Naive thymus-derived CD4-positive, alpha-beta T cell (primary cell): ENCODE measurements at regions of chr11 and their contacts with region 1.

Region 1: DNA sequence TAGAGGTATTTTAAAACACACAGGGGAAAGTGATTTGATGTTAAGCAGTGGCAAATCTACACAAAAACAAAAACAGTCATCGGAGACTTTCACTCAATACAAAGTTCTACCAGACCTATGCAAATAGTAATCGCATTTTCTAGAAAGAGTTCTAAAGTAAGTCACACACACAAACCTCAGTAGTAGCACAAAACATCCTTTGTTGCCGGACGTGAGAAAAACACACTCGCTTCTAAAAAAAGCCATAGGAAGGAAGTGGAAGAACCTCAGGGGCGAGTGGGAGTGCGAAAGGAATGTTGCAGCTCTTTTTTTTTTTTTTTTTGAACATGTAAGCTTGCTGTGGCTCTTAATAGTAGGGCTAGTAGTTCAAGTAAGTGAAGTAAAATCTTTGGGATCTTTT is 88.9 kb downstream of the MAML2 start:
- DNase-seq: peak in 7 of 9 donors; percentile 32 to 64 (median 43)
- ATAC-seq: peak; percentile 32
- H3K4me3 ChIP-seq: peak overlapping the region; percentile 40
- H3K4me3 Mint-ChIP-seq: peak overlapping the region; percentile 74 to 87 (median 81)
- H3K27ac ChIP-seq: peak overlapping the region; percentile 77
- H3K27ac Mint-ChIP-seq: peak overlapping the region; percentile 87 to 100 (median 96)
- H3K4me1 ChIP-seq: peaks cover 58 to 78% of the 10 kb centered on the region in 2 donors
- H3K4me1 Mint-ChIP-seq: peaks cover 62 to 99% (median 94%) of the 10 kb centered on the region in 7 donors
- H3K27me3 ChIP-seq: no peaks in the 10 kb centered on the region
- H3K27me3 Mint-ChIP-seq: no peaks in the 10 kb centered on the region

Region 2: DNA sequence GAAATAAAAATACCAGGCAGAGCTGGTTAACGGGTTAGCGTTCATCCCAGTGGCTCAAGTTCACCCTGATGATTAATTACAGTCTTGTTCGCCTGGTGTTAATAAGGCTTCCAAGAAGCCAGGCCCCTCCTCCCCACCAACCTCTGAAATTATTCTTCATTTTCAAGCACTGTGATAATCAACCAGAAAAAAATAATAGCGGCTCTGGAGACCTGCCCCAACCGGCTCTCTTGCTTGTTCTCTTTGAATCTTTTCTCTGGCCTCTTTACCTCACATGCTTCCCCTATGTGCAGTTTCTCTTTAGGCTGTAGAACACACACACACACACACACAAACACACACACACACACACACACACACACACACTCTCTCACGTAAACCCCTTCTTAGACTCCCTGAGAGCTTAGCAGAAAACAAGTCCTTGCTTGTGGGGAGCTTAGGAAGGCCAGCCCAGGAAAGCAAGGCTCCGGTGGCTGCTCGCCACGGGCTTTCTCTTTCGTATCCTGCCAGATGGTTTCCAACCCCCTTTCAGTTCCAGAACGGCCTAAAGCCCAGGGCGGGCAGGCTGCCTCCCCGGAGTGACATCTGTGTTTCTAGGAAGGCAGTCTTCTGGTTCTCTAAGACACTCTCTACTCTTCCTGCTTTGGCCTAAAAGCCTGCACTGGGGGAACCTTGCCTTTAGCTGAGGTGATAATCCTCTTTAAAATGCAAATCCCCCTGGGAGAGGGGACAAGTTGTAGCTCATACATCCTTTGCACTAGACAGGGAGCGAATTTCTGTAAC is 916.7 kb before region 1 on chr11:
- CTCF ChIA-PET with region 1: no interaction called
- POLR2A ChIA-PET with region 1: no interaction called
- intact Hi-C with region 1: no loop called
- DNase-seq: peak; percentile 12 to 55 (median 39)
- ATAC-seq: peak; percentile 69
- H3K4me3 ChIP-seq: peak overlapping the region; percentile 36
- H3K4me3 Mint-ChIP-seq: no peak overlapping the region
- H3K27ac ChIP-seq: peak overlapping the region; percentile 59
- H3K27ac Mint-ChIP-seq: no peak overlapping the region
- H3K4me1 ChIP-seq: peaks cover 4 to 20% of the 10 kb centered on the region in 2 donors
- H3K4me1 Mint-ChIP-seq: peaks cover 0 to 12% (median under 1%) of the 10 kb centered on the region in 7 donors
- H3K27me3 ChIP-seq: no peaks in the 10 kb centered on the region
- H3K27me3 Mint-ChIP-seq: no peaks in the 10 kb centered on the region

Region 3: GRCh38 chr11:95680169-95680929 is 573.7 kb before region 1 on chr11:
- CTCF ChIA-PET with region 1: no interaction called
- POLR2A ChIA-PET with region 1: no interaction called
- intact Hi-C with region 1: loop called in 1 of 2 experiments (anchors 10 kb)
- DNase-seq: no peak
- ATAC-seq: no peak
- H3K4me3 ChIP-seq: no peak overlapping the region
- H3K4me3 Mint-ChIP-seq: peak overlapping the region; percentile 21 to 78 (median 69)
- H3K27ac ChIP-seq: peak overlapping the region; percentile 60
- H3K27ac Mint-ChIP-seq: peak overlapping the region in 7 of 9 donors; percentile 44 to 87 (median 73)
- H3K4me1 ChIP-seq: peaks cover 0 to 41% of the 10 kb centered on the region in 2 donors
- H3K4me1 Mint-ChIP-seq: peaks cover 27 to 89% (median 71%) of the 10 kb centered on the region in 7 donors
- H3K27me3 ChIP-seq: no peaks in the 10 kb centered on the region
- H3K27me3 Mint-ChIP-seq: no peaks in the 10 kb centered on the region

Region 4: DNA sequence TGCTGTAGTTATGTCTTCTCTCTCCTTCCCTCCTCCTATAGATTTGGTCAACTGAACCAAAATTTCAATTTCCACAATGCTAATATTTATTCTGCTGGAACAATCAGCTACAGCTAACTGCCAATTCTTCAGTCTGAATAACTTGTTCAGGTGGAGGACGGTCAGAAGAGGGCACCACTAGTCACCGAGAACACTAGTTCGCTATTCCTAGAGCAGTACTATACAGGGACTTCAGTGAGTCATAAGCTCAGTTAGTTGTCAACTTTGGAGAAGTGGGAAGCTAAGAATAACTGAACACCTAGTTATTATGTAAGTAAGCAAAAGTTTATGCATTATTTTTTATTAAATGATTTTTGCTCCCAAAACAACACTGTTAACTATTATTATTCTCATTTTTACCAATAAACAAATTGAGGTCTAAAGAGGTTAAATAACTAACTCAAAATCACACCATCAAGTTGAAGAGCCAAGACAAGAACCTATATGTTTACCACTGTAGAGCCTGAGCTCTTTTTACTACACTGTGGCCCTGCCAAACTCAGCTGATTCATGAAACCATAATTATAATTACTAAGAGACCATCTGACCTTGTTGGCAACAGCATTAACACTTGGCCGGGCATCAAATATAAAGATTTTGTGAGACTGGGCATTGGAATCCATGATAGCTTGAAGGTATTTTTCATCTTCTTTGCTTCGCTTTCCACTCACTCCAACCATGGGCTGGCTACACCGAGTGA is 404.8 kb before region 1 on chr11:
- CTCF ChIA-PET with region 1: no interaction called
- POLR2A ChIA-PET with region 1: no interaction called
- intact Hi-C with region 1: no loop called
- DNase-seq: peak in 6 of 9 donors; percentile 2 to 39 (median 19)
- ATAC-seq: peak; percentile 64
- H3K4me3 ChIP-seq: no peak overlapping the region
- H3K4me3 Mint-ChIP-seq: no peak overlapping the region
- H3K27ac ChIP-seq: no peak overlapping the region
- H3K27ac Mint-ChIP-seq: peak overlapping the region in 2 of 9 donors; percentile 11 to 49
- H3K4me1 ChIP-seq: no peaks in the 10 kb centered on the region
- H3K4me1 Mint-ChIP-seq: no peaks in the 10 kb centered on the region
- H3K27me3 ChIP-seq: no peaks in the 10 kb centered on the region
- H3K27me3 Mint-ChIP-seq: no peaks in the 10 kb centered on the region

Region 5: GRCh38 chr11:96207459-96208449 is 46.3 kb before region 1 on chr11:
- CTCF ChIA-PET with region 1: no interaction called
- POLR2A ChIA-PET with region 1: interaction called, 3 read pairs
- intact Hi-C with region 1: loop called (anchors 1 kb)
- DNase-seq: peak in 7 of 9 donors; percentile 43 to 73 (median 57)
- ATAC-seq: peak; percentile 70
- H3K4me3 ChIP-seq: peak overlapping the region; percentile 9
- H3K4me3 Mint-ChIP-seq: peak overlapping the region; percentile 51 to 84 (median 74)
- H3K27ac ChIP-seq: peak overlapping the region; percentile 62
- H3K27ac Mint-ChIP-seq: peak overlapping the region; percentile 86 to 99 (median 95)
- H3K4me1 ChIP-seq: peaks cover 70 to 93% of the 10 kb centered on the region in 2 donors
- H3K4me1 Mint-ChIP-seq: peaks cover 45 to 96% (median 92%) of the 10 kb centered on the region in 7 donors
- H3K27me3 ChIP-seq: no peaks in the 10 kb centered on the region
- H3K27me3 Mint-ChIP-seq: no peaks in the 10 kb centered on the region

Region 6: GRCh38 chr11:96235751-96236150 is 18.3 kb before region 1 on chr11:
- CTCF ChIA-PET with region 1: interaction called, 3 read pairs
- POLR2A ChIA-PET with region 1: interaction called, 13 read pairs
- intact Hi-C with region 1: no loop called
- DNase-seq: peak in 1 of 9 donors; percentile 64
- ATAC-seq: peak; percentile 57
- H3K4me3 ChIP-seq: no peak overlapping the region
- H3K4me3 Mint-ChIP-seq: peak overlapping the region in 8 of 10 donors; percentile 9 to 70 (median 39)
- H3K27ac ChIP-seq: peak overlapping the region; percentile 6
- H3K27ac Mint-ChIP-seq: peak overlapping the region in 6 of 9 donors; percentile 38 to 83 (median 64)
- H3K4me1 ChIP-seq: peaks cover 0 to 53% of the 10 kb centered on the region in 2 donors
- H3K4me1 Mint-ChIP-seq: peaks cover 20 to 40% (median 28%) of the 10 kb centered on the region in 7 donors
- H3K27me3 ChIP-seq: no peaks in the 10 kb centered on the region
- H3K27me3 Mint-ChIP-seq: no peaks in the 10 kb centered on the region

Region 7: GRCh38 chr11:96242971-96243647 is 11.0 kb before region 1 on chr11:
- CTCF ChIA-PET with region 1: interaction called, 3 read pairs
- POLR2A ChIA-PET with region 1: interaction called, 37 read pairs
- intact Hi-C with region 1: loop called (anchors 1 kb)
- DNase-seq: peak; percentile 47 to 83 (median 66)
- ATAC-seq: peak; percentile 92
- H3K4me3 ChIP-seq: peak overlapping the region; percentile 63
- H3K4me3 Mint-ChIP-seq: peak overlapping the region; percentile 76 to 89 (median 84)
- H3K27ac ChIP-seq: peak overlapping the region; percentile 72
- H3K27ac Mint-ChIP-seq: peak overlapping the region; percentile 86 to 94 (median 92)
- H3K4me1 ChIP-seq: peaks cover 8 to 61% of the 10 kb centered on the region in 2 donors
- H3K4me1 Mint-ChIP-seq: peaks cover 37 to 72% (median 63%) of the 10 kb centered on the region in 7 donors
- H3K27me3 ChIP-seq: no peaks in the 10 kb centered on the region
- H3K27me3 Mint-ChIP-seq: no peaks in the 10 kb centered on the region

Region 8: DNA sequence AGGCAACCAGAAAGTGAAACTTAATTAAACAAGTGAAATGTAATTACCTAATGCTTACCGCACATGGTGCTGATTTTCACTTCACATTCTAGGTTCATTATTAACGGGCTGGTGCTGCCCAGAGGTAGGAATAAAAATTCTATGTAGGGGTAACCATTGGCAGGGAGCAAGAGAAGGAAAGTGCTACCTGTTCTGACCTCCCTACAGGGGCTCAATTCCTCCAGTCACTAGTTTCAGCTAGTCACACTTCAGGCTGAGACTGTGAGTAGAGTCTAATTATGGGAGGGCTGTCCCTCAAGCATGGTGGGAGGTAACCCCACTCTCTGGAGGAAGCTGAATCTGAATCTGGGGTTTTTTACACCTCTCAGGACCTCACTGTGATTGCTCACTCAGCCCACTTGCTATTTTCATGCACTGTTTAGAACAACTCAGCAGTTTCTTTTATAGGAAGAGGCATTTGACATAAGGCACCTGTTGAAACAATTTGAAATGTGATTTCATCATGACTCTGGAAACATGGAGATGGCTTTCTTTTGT is 13.5 kb after region 1 on chr11:
- CTCF ChIA-PET with region 1: interaction called, 3 read pairs
- POLR2A ChIA-PET with region 1: interaction called, 4 read pairs
- intact Hi-C with region 1: loop called (anchors 1 kb)
- DNase-seq: peak in 3 of 9 donors; percentile 23 to 60 (median 47)
- ATAC-seq: peak; percentile 91
- H3K4me3 ChIP-seq: peak overlapping the region; percentile 21
- H3K4me3 Mint-ChIP-seq: peak overlapping the region; percentile 54 to 84 (median 77)
- H3K27ac ChIP-seq: peak overlapping the region; percentile 73
- H3K27ac Mint-ChIP-seq: peak overlapping the region; percentile 85 to 100 (median 94)
- H3K4me1 ChIP-seq: peaks cover 26 to 51% of the 10 kb centered on the region in 2 donors
- H3K4me1 Mint-ChIP-seq: peaks cover 43 to 96% (median 92%) of the 10 kb centered on the region in 7 donors
- H3K27me3 ChIP-seq: no peaks in the 10 kb centered on the region
- H3K27me3 Mint-ChIP-seq: no peaks in the 10 kb centered on the region

Region 9: DNA sequence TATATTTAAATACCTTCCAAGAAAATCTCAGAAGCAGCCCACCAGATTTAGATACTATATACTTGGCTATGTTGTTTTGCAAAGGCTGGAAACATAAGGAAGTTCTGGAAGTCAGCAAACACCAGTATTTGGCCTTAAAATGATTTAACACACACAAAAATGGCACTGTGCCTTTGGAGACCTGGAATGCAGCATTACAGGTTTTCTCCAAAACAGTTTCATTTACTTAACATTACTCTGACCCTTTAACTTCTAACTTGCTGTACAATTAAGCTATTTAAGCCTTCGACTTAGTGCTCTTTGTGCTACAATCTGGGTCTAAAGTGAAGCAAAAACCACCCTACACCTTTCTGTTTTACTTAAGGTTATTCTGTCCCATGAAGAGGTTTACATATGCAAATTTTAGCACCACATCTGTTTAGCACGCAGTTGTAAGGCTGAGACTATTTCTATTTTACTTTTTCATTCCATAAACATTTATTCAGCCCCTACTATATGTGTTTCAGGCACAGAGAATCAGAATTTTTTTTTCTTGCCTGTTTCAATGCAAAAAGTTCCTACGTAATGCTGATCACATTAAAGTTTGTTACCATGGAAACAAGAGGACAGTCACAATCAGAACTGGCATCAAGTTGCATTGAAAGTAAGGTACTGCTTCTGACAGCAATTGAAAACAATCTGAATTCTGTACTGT is 18.6 kb after region 1 on chr11:
- CTCF ChIA-PET with region 1: no interaction called
- POLR2A ChIA-PET with region 1: interaction called, 8 read pairs
- intact Hi-C with region 1: loop called (anchors 1 kb)
- DNase-seq: peak in 7 of 9 donors; percentile 37 to 74 (median 65)
- ATAC-seq: peak; percentile 87
- H3K4me3 ChIP-seq: no peak overlapping the region
- H3K4me3 Mint-ChIP-seq: peak overlapping the region in 3 of 10 donors; percentile 6 to 60 (median 24)
- H3K27ac ChIP-seq: peak overlapping the region; percentile 69
- H3K27ac Mint-ChIP-seq: peak overlapping the region in 8 of 9 donors; percentile 66 to 100 (median 90)
- H3K4me1 ChIP-seq: peaks cover 6 to 15% of the 10 kb centered on the region in 2 donors
- H3K4me1 Mint-ChIP-seq: peaks cover 16 to 82% (median 76%) of the 10 kb centered on the region in 7 donors
- H3K27me3 ChIP-seq: no peaks in the 10 kb centered on the region
- H3K27me3 Mint-ChIP-seq: no peaks in the 10 kb centered on the region